Activated CD8-positive, alpha-beta memory T cell treated with anti-CD3 and anti-CD28 coated beads, Interleukin-2, amount 10 ng/mL, durations not matched to agents 7 days and 5 days (primary cell): ENCODE measurements at regions of chr12 and their contacts with region 1.

Region 1: DNA sequence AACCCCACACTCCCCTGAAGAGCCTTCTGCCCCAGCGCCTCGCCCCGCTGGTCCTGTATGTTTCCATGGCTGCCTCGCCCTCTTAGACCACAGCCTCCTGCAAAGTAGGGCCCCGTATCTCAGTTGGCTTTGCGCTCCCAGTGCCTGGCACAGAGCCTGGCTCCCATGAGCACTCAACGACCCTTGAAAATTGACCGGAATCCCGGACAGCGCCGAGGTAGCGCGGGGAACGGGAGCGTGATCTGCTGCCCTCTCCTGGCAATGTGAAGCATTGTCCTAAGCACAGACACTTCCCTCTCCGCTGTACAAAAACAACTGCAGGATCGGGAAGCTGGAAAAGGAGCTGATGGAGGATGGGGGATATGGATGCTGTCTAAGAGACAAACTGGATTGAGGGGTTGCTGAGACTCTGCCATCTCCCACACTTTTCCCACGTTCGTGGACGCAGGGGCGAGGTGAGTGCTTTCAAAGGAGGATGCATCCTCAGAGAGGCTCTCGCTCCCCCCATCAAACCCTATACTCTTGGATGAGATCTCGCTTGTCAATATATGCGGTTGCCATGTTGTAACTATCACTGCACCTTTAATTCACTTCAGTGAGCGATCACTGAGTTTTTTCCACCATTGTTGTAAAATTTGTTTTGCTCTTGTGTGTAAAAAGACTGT is 10.7 kb upstream of the FKBP4 start:
- DNase-seq: peak; percentile 61
- ATAC-seq: peak; percentile 92
- H3K4me3 Mint-ChIP-seq: peak overlapping the region; percentile 49
- H3K27ac Mint-ChIP-seq: no peak overlapping the region
- H3K4me1 Mint-ChIP-seq: peaks cover 7% of the 10 kb centered on the region
- H3K27me3 Mint-ChIP-seq: peaks cover 32% of the 10 kb centered on the region

Region 2: DNA sequence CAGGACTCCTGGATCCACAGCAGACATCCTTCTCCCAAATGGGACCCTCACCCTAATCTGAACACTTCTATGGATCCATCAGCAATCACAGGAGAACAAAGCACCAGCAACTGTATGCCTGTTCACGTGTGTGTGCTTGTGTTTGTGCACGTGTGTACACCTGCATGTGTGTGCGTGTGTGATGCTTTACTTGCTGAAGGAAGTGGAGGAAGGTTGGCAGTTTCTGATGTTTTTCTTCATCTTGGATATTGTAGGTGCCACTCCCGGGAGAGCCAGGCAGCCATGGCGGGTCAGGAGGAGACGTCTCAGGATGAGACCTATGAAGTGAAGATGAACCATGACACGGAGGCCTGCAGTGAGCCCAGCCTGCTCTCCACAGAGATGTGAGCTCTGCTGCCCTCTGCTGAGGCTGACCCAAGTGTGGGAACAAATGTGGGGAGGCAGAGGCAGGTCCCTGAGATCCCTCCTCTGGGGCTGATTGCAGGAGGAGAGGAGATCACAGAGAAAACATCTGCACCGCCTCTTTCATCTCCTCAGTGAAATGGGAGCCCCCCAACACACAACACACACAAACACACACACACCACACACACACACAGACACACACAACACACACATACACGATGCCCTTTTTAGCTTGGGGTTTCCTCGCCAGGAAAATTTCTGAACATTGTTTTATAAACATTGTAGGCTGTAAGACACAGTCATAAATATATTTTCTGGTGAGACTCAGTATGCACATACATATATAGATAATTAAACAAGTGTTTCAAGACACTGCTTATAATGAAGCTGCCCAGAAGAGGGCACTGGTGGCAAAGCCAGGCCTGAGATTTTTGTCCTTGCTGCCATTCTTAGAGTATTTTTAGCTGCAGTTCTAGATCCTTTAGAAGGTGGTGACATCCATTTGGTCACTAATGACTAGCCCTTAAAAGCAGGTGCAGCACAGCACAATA is 101.5 kb before region 1 on chr12:
- CTCF ChIA-PET with region 1: interaction called, 68 read pairs
- DNase-seq: peak; percentile 71
- ATAC-seq: peak; percentile 79
- H3K4me3 Mint-ChIP-seq: peak overlapping the region; percentile 7
- H3K27ac Mint-ChIP-seq: peak overlapping the region; percentile 74
- H3K4me1 Mint-ChIP-seq: peaks cover 2% of the 10 kb centered on the region
- H3K27me3 Mint-ChIP-seq: no peaks in the 10 kb centered on the region

Region 3: GRCh38 chr12:2691006-2691344 is 93.1 kb before region 1 on chr12:
- CTCF ChIA-PET with region 1: interaction called, 68 read pairs
- DNase-seq: peak; percentile 80
- ATAC-seq: peak; percentile 73
- H3K4me3 Mint-ChIP-seq: peak overlapping the region; percentile 81
- H3K27ac Mint-ChIP-seq: peak overlapping the region; percentile 87
- H3K4me1 Mint-ChIP-seq: peaks cover 36% of the 10 kb centered on the region
- H3K27me3 Mint-ChIP-seq: peaks cover 12% of the 10 kb centered on the region

Region 4: GRCh38 chr12:2769871-2770533 is 14.1 kb before region 1 on chr12:
- CTCF ChIA-PET with region 1: no interaction called
- DNase-seq: no peak
- ATAC-seq: no peak
- H3K4me3 Mint-ChIP-seq: no peak overlapping the region
- H3K27ac Mint-ChIP-seq: no peak overlapping the region
- H3K4me1 Mint-ChIP-seq: no peaks in the 10 kb centered on the region
- H3K27me3 Mint-ChIP-seq: no peaks in the 10 kb centered on the region

Region 5: DNA sequence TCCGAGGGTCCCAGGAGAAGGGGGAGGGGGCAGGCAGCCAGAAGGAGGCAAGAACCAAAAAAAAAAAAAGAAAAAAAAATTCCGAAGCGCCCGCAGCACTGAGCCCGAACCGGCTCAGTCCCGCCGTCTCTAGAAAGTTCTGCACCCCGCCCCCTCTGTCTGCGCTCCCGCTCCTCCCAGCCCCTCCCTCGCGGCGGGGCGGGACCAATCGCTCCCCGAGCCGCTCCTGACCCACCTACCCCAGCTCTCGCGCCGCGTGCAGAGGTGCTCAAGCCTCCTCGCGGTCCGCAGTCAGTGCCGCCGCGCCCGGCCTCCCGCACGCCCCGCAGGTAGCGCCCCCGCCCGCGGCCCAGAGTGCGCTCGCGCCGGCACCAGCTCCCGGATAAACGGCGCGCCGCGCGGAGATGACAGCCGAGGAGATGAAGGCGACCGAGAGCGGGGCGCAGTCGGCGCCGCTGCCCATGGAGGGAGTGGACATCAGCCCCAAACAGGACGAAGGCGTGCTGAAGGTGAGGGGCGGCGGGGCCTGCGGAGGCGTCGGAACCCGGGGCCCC is 10.7 kb after region 1 on chr12 and contains the start of gene FKBP4:
- CTCF ChIA-PET with region 1: interaction called, 29 read pairs
- DNase-seq: peak; percentile 92
- ATAC-seq: peak; percentile 91
- H3K4me3 Mint-ChIP-seq: peak within 1 kb of the TSS; percentile 91
- H3K27ac Mint-ChIP-seq: peak within 1 kb of the TSS; percentile 85
- H3K4me1 Mint-ChIP-seq: peaks cover 19% of the 10 kb centered on the region
- H3K27me3 Mint-ChIP-seq: peaks cover 5% of the 10 kb centered on the region
- total RNA-seq, gene FKBP4: 78.2 to 109 TPM